Heart right ventricle (tissue), 16 donors: ENCODE measurements at regions of chr1 and their contacts with region 1.

Region 1: GRCh38 chr1:240732390-240732789 is 120.4 kb upstream of the GREM2 start:
- DNase-seq: no peak
- ATAC-seq: no peak
- H3K4me3 ChIP-seq: no peak overlapping the region
- H3K27ac ChIP-seq: no peak overlapping the region
- H3K4me1 ChIP-seq: no peaks in the 10 kb centered on the region
- H3K27me3 ChIP-seq: peaks cover 0 to 3% (median 0%) of the 10 kb centered on the region in 7 donors
- CTCF ChIP-seq: peak in 8 of 9 donors; percentile 12 to 64 (median 51)

Region 2: DNA sequence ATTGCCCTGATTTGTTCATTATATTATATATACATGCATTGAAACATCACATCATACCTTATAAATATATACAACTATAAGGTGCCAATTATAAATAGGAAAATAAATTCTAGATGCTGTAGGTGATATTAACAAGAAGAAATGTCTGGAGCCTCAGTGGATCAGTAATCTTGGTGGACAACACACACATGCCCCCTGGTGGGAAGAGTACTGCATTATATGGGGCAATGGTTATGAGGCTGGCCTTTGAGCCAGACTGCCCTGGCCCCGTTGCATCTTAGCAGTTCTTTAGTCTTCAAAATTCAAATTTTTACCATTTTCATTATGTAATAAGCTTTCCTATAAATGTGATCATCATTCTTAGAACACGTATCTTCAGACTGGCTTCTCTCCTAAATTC is 214.5 kb after region 1 on chr1:
- intact Hi-C with region 1: loop called in 1 of 10 experiments (anchors 5 kb)
- DNase-seq: no peak
- ATAC-seq: no peak
- H3K4me3 ChIP-seq: no peak overlapping the region
- H3K27ac ChIP-seq: no peak overlapping the region
- H3K4me1 ChIP-seq: no peaks in the 10 kb centered on the region
- H3K27me3 ChIP-seq: no peaks in the 10 kb centered on the region
- CTCF ChIP-seq: peak in 6 of 9 donors; percentile 5 to 42 (median 32)

Region 3: DNA sequence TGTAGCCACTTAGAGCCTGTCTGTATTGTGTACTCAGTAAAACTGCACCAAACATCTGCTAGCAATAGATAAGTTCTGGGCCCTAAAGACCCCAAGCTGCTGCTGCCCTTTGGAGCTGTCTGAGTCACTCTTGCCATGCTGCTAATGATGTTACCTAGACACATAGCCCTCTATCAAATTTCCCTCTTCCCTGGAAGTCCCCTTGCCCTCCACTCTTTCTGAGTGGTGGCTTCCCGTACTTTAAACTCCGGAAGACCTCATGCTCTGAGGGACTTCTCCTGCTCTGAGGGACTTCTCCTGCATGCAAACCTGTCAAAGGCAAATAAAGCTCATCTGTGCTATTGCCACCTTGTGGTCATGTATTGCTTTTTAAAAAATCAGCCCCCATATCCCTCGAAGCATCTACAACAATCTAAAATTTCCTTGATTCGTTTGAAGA is 753.2 kb after region 1 on chr1:
- intact Hi-C with region 1: loop called in 1 of 10 experiments (anchors 10 kb)
- DNase-seq: no peak
- ATAC-seq: no peak
- H3K4me3 ChIP-seq: no peak overlapping the region
- H3K27ac ChIP-seq: no peak overlapping the region
- H3K4me1 ChIP-seq: no peaks in the 10 kb centered on the region
- H3K27me3 ChIP-seq: no peaks in the 10 kb centered on the region
- CTCF ChIP-seq: peak in 1 of 9 donors; percentile 20